ENCODE measurements at regions of chr22 and their contacts with region 1.

Region 1: DNA sequence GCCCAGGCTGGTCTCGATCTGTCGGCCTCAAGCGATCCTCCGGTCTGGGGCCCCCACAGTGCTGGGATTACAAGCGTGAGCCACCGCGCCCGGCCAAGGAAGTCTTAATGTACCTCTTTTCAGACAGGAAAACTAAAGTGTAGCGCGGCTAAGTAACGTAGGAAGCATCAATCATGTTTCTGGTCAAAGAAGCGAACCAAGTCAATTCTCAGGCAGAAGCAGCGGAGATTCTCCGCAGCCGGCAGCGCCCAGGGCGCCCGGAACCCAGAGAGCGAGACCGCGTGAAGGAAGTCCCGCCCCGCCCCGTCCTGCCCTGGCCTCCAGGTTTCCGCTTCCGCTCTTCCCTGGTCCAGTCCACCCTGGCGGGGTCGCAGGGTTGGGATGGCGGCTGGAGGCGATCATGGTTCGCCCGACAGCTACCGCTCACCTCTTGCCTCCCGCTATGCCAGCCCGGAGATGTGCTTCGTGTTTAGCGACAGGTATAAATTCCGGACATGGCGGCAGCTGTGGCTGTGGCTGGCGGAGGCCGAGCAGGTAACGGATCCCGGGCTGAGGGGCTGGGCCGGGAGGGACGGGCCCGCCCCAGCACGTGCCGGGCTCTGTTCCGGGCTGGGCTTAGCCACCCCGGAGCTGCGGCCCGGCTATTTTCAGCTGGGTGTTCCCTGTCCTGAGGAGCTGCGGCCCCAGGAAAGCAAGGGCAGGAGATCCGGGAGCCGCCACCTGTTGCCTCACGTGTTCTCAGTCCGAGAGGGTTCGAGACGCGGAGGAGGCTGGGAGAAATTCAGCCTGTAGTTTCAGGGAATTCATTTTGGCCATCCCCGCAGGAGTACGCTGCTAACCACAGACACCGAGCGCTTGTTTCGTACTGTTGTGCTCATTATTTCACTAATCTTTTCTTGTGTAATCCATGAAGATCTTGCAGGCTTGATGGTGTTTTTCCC is at the start of gene ADSL:
- DNase-seq: peak; percentile 85
- H3K4me3 ChIP-seq: peak within 1 kb of the TSS; percentile 76 to 98 (median 90)
- H3K27ac ChIP-seq: peak within 1 kb of the TSS; percentile 51
- H3K4me1 ChIP-seq: peaks cover 16% of the 10 kb centered on the region
- H3K27me3 ChIP-seq: no peaks in the 10 kb centered on the region
- CTCF ChIP-seq: peak in 1 of 2 donors; percentile 34
- POLR2A ChIP-seq: peak; percentile 97
- total RNA-seq, gene ADSL: 86.2 and 103 TPM in 2 replicates

Region 2: DNA sequence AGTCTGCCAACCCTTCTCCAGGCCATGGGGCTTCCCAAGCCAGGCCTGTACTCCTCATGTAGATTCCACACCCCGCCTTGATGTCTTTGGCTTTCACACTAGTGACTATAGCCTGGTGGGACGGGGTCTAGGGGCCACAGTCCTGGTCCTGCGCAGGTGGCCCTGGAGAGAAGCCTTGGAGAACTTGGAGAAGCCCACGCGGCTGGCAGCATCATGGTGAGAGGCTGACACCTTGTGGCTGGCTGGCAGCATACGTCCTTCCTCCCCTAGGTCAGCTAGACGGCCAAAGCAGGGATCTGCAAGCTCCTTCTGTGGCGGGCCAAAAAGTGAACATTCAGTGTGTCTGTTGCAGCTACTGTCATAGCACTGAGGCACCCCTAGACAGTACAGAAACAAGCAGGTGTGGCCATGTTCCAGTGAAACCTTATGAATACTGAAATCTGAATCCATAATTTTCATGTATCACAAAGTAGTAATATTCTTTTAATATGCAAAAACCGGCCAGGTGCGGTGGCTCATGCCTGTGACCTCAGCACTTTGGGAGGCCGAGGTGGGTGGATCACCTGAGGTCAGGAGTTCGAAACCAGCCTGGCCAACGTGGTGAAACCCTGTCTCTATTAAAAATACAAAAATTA is 309.7 kb before region 1 on chr22:
- CTCF ChIA-PET with region 1: interaction called, 31 read pairs
- POLR2A ChIA-PET with region 1: no interaction called
- dilution Hi-C with region 1: no loop called
- intact Hi-C with region 1: no loop called
- DNase-seq: peak; percentile 69
- H3K4me3 ChIP-seq: no peak overlapping the region
- H3K27ac ChIP-seq: no peak overlapping the region
- H3K4me1 ChIP-seq: peaks cover 11% of the 10 kb centered on the region
- H3K27me3 ChIP-seq: peaks cover 3 to 24% of the 10 kb centered on the region in 2 experiments
- CTCF ChIP-seq: peak; percentile 62 to 84
- POLR2A ChIP-seq: no peak

Region 3: DNA sequence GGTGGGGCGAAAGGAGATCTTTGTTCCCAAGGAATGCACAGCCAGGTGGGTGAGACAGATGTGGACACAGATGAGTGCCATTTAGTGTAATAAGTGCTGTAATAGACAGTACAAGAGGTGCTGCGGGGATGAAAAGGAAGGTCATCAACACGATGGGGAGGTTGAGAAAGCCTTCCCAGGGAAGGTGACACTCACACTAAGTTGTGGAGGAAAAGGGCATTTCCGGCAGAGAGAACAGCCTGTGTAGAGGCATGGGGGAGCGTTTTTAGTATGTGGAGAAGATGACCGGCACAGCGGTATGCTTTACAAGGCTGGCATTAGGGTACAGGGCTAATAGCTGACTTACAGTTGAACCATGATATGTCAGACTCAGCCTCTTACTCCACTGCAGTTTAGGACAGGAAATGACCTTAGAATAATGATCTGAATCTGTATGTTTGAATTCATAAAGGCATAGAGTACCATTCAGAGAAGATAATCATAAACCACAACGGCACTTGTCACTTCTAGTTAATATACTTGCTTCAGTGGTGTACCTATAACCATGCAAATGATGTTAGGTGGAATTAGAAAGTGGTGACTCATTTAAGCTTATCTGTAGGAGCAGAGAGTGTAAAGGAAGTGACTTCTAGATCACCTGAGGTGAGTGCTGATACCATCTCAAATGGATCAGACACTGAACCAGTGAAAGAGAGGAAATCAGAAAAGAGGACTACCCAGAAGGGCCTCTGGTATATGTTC is 291.1 kb before region 1 on chr22:
- CTCF ChIA-PET with region 1: interaction called, 5 read pairs
- POLR2A ChIA-PET with region 1: no interaction called
- dilution Hi-C with region 1: no loop called
- intact Hi-C with region 1: loop called (anchors 5 kb)
- DNase-seq: peak; percentile 37
- H3K4me3 ChIP-seq: no peak overlapping the region
- H3K27ac ChIP-seq: no peak overlapping the region
- H3K4me1 ChIP-seq: peaks cover 33% of the 10 kb centered on the region
- H3K27me3 ChIP-seq: peaks cover 0 to 5% of the 10 kb centered on the region in 2 experiments
- CTCF ChIP-seq: no peak
- POLR2A ChIP-seq: no peak

Region 4: DNA sequence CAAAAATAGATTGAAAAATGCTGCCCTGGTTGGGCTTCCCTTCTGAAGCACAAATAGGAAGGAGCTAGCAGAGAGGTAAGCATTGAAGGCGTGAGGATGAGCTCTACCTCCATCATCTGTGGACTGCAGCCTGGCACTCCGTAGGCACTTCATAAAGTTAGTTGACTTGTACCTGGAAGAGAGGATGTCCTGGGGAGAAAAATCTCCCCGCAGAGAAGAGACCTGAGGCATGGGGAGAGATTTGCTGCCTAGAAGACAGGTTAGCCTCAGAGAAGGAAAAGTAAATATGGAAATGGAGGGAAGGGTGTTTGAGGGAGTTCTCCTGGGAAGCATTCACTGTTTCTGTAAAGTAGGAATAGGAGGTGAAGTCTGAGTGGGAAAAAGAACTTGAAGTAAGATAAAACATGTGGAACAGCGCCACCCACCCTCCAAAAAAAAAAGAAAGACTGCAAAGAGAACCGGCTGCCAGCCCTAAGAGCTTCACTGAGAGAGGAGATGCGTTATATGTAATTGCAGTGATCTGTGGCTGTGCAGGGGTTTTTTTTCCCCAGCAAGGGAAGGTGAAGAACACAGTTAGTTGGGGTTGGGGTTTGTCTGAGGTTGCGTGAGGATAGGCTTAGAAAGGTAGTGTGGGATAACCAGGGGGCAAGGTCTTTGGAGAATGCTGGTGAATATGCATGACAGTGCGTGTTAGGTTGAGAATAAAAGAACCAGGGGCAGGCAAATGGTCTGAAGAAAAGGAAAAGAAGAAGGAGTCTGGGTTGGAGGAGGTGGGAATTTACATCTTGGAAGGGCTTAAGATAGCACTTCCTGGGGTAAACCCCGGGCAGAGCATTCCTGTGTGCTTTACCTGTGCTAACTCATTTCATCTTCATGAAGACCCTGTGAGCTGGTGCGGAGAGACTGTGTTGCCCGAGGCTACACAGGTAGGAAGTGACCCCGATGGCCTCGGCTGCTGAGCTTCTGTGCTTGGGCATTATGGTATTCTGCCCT is 152.7 kb before region 1 on chr22:
- CTCF ChIA-PET with region 1: interaction called, 11 read pairs
- POLR2A ChIA-PET with region 1: no interaction called
- dilution Hi-C with region 1: no loop called
- intact Hi-C with region 1: no loop called
- DNase-seq: peak; percentile 41
- H3K4me3 ChIP-seq: no peak overlapping the region
- H3K27ac ChIP-seq: no peak overlapping the region
- H3K4me1 ChIP-seq: peaks cover 10% of the 10 kb centered on the region
- H3K27me3 ChIP-seq: no peaks in the 10 kb centered on the region
- CTCF ChIP-seq: peak; percentile 16 to 25
- POLR2A ChIP-seq: no peak

Region 5: GRCh38 chr22:40276996-40277823 is 69.2 kb before region 1 on chr22:
- CTCF ChIA-PET with region 1: no interaction called
- POLR2A ChIA-PET with region 1: no interaction called
- dilution Hi-C with region 1: no loop called
- intact Hi-C with region 1: loop called (anchors 5 kb)
- DNase-seq: peak; percentile 76
- H3K4me3 ChIP-seq: peak overlapping the region in 2 of 3 experiments; percentile 41 to 76
- H3K27ac ChIP-seq: peak overlapping the region; percentile 58
- H3K4me1 ChIP-seq: peaks cover 33% of the 10 kb centered on the region
- H3K27me3 ChIP-seq: no peaks in the 10 kb centered on the region
- CTCF ChIP-seq: no peak
- POLR2A ChIP-seq: no peak

Region 6: GRCh38 chr22:40334899-40335298 is 11.5 kb before region 1 on chr22:
- CTCF ChIA-PET with region 1: interaction called, 21 read pairs
- POLR2A ChIA-PET with region 1: no interaction called
- dilution Hi-C with region 1: no loop called
- intact Hi-C with region 1: no loop called
- DNase-seq: no peak
- H3K4me3 ChIP-seq: no peak overlapping the region
- H3K27ac ChIP-seq: no peak overlapping the region
- H3K4me1 ChIP-seq: peaks cover 4% of the 10 kb centered on the region
- H3K27me3 ChIP-seq: no peaks in the 10 kb centered on the region
- CTCF ChIP-seq: no peak
- POLR2A ChIP-seq: no peak